ENCODE measurements at regions of chr19 and their contacts with region 1.

Region 1: DNA sequence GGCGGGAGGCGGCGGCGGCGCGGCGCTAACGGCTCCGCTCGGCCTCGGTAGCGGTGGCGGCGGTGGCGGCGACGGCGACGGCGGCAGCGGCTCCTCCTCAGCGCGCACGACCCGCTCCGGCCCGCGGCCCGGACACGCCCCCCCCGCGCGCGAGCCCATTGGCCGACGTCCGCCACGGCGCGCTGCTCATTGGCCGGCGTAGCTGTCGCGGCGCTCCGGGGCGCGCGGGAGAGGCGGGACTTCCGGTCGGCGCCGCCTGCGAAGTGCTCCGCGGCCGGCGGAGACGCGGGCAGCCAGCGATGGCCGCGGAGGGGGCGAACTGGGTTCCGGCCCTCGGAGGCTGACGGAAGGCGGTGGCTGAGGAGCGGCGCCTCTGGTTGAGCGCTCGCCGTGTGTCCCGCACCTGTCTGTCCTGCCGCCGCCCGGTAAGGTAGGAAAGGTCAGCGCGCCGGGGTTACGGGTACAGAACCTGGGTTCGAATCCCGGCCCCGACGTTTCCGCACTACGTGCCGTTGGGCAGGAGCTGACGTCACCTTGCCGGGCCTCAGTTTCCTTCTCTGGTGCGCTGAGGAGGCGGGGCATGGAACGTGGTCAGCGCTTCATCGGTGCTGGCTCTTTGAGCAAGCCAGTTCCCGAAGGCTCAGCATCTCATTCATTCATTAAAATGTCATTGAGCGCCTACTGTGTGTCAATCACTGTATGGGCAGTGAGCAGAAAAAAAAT is at the start of gene ELAVL1:
- DNase-seq: peak; percentile 93
- H3K4me3 ChIP-seq: peak within 1 kb of the TSS; percentile 84 to 95 (median 86)
- H3K27ac ChIP-seq: peak within 1 kb of the TSS; percentile 84 to 88 (median 86)
- H3K4me1 ChIP-seq: peaks cover 39 to 56% (median 50%) of the 10 kb centered on the region in 4 donors
- H3K27me3 ChIP-seq: no peaks in the 10 kb centered on the region
- CTCF ChIP-seq: no peak
- EP300 ChIP-seq: no peak
- POLR2A ChIP-seq: no peak
- total RNA-seq, gene ELAVL1: 27.0 to 49.1 (median 38.3) TPM

Region 2: DNA sequence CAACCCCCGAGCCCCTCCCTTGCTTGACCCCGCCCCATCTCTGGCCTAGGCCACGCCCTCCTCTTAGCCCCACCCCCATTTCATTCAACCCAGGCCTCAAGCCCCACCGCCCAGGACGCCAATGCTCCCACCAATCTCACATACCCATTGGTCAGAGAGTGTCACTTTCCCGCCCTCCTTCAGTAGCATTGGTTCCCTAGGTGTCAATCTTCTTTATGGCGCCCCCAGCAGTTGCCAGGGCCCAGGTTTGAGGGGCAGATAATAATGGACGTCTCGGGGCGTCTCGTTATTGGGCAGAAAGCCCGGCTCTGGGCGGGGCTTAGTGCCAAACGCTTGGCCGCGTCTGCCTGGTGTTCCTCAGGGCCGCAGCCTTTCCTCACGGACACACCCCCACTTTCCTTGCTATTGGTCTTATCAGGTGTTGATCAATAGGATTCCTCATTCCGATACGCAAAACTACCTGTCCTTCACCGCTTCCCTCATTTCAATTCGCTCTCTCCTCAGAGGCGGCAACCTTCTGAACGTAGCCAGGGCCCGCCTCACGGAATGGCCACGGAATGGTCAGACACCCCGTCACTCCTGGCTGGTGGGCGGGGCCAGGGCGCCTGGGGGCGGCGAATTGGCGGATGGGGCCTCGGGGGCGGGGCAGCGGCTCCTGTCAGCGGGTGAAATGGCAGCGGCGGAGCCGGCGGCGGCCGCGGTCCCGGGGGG is 176.0 kb before region 1 on chr19 and contains the start of gene EVI5L:
- intact Hi-C with region 1: no loop called
- DNase-seq: peak; percentile 100
- H3K4me3 ChIP-seq: peak within 1 kb of the TSS; percentile 79 to 94 (median 85)
- H3K27ac ChIP-seq: peak within 1 kb of the TSS in 3 of 4 donors; percentile 46 to 67 (median 59)
- H3K4me1 ChIP-seq: peaks cover 21 to 43% (median 40%) of the 10 kb centered on the region in 4 donors
- H3K27me3 ChIP-seq: peaks cover 0 to 10% (median 0%) of the 10 kb centered on the region in 4 donors
- CTCF ChIP-seq: peak in 1 of 3 experiments; percentile 22
- EP300 ChIP-seq: no peak
- POLR2A ChIP-seq: no peak
- total RNA-seq, gene EVI5L: 19.9 to 42.0 (median 29.2) TPM

Region 3: DNA sequence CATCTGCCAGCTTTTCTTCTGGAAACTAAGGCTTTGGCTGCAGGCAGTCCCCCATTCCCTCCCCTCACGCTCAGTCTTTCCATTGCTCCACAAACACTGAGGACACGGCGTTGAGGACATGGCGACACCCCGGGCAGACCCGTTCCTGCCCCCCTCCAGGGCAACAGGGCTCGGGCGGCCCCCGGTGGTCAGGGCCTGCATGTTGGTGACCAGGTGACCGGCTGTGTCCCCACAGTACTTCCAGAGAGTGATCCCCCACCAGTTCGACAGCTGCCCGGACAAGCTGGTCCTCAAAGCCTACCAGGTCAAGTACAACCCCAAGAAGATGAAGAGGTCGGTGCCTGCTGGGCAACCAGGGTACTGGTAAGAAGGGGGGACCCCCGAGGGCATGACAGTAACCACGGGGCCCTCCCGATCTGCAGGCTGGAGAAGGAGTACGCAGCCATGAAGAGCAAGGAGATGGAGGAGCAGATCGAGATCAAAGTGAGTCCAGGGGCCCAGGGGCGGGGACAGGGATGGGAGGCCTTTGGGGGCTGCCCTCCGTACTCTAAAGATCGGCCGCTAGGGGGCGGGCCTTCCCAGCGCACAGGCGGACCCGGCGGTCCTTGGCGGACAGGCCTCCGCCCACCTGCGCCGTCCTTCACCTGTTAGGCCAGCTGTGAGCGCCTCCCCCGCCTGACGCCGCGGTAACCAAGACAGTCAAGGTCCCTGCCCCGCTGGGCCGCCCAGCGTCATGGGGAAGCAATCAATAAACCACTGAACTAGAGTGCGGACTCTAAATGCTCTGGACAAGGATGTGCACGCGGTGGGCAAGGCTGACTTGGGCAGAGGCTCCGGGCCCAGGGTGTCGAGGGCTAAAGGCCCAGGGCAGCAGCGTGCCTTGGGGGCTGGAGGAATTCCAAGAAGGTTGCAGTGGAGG is 152.6 kb before region 1 on chr19:
- intact Hi-C with region 1: loop called (anchors 2 kb)
- DNase-seq: no peak
- H3K4me3 ChIP-seq: no peak overlapping the region
- H3K27ac ChIP-seq: no peak overlapping the region
- H3K4me1 ChIP-seq: peaks cover 8 to 11% (median 9%) of the 10 kb centered on the region in 4 donors
- H3K27me3 ChIP-seq: peaks cover 0 to 38% (median 0%) of the 10 kb centered on the region in 4 donors
- CTCF ChIP-seq: peak; percentile 64 to 81 (median 75)
- EP300 ChIP-seq: no peak
- POLR2A ChIP-seq: no peak

Region 4: GRCh38 chr19:7943444-7944176 is 62.1 kb before region 1 on chr19 and contains the start of gene TIMM44:
- intact Hi-C with region 1: loop called (anchors 5 kb)
- DNase-seq: peak; percentile 100
- H3K4me3 ChIP-seq: peak within 1 kb of the TSS; percentile 63 to 97 (median 79)
- H3K27ac ChIP-seq: peak within 1 kb of the TSS; percentile 93 to 98 (median 96)
- H3K4me1 ChIP-seq: peaks cover 19 to 55% (median 49%) of the 10 kb centered on the region in 4 donors
- H3K27me3 ChIP-seq: no peaks in the 10 kb centered on the region
- CTCF ChIP-seq: no peak
- EP300 ChIP-seq: no peak
- POLR2A ChIP-seq: peak; percentile 47
- total RNA-seq, gene TIMM44: 61.6 to 111 (median 98.5) TPM

Region 5: DNA sequence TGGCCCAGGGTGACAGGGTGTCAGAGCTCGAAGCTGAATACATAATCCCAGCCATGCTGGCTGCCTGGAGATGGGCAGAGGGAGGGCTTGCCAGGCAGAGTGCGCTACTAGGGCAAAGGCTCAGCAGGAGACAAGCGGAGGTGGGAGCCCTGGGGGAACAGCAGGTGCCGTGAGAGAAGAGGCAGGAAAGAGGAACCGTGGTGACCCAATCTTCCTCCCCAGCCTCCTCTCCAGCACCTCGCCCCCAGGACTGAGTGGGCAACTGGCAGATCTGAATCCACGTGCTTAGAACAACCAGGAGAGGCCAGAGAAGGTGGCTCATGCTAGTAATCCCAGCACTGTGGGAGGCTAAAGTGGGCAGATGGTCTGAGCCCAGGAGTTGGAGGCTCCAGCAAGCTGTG is 35.8 kb after region 1 on chr19:
- intact Hi-C with region 1: no loop called
- DNase-seq: no peak
- H3K4me3 ChIP-seq: no peak overlapping the region
- H3K27ac ChIP-seq: no peak overlapping the region
- H3K4me1 ChIP-seq: no peaks in the 10 kb centered on the region
- H3K27me3 ChIP-seq: peaks cover 0 to 41% (median 1%) of the 10 kb centered on the region in 4 donors
- CTCF ChIP-seq: no peak
- EP300 ChIP-seq: no peak
- POLR2A ChIP-seq: no peak

Measured in esophagus muscularis mucosa (tissue), 4 donors.